K562 (cell line): ENCODE measurements at regions of chr21 and their contacts with region 1.

Region 1: DNA sequence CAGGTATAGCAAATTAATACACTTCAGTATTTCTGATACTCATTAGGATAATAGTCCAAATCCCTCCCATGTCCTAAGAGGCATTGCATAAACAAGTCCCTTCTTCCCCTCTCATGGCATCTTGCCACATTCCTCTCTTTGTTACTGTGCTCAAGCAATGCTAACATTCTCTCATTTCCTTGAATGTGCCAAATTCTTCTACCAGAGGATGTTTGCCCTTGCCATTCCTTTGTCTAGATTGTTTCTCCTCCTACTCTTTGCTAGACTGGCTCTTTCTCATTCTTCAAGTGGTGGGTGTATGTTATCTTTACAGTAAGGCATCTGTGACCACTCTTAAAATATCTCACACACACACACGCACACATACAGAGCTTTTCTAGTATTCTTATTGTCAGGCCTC is 621.0 kb upstream of the CXADR start:
- DNase-seq: no peak
- ATAC-seq: no peak
- H3K4me3 ChIP-seq: no peak overlapping the region
- H3K27ac ChIP-seq: no peak overlapping the region
- H3K4me1 ChIP-seq: no peaks in the 10 kb centered on the region
- H3K27me3 ChIP-seq: no peaks in the 10 kb centered on the region
- CTCF ChIP-seq: no peak
- EP300 ChIP-seq: no peak
- POLR2A ChIP-seq: no peak
- RAD21 ChIP-seq: no peak

Region 2: DNA sequence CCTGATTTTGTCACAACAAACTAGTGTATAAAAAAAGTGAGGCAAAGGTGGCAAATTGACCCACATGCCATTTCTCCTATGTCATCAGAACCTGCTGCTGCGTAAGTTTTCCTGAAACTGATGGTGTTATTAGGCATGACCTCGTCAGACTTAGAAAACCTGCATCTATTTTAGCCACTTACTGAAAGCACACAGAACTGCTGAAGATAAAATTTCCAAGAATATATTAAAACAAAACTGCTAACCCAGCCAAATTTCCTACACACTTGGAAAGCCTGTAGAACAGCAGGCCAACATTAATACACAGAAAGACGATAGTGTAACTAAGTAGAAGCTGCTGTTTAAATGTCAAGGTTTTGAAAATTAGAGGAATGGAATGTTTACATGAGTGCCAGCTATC is 53.5 kb before region 1 on chr21:
- CTCF ChIA-PET with region 1: no interaction called
- POLR2A ChIA-PET with region 1: no interaction called
- in situ Hi-C with region 1: no loop called
- intact Hi-C with region 1: loop called (anchors 10 kb)
- DNase-seq: no peak
- ATAC-seq: no peak
- H3K4me3 ChIP-seq: no peak overlapping the region
- H3K27ac ChIP-seq: no peak overlapping the region
- H3K4me1 ChIP-seq: no peaks in the 10 kb centered on the region
- H3K27me3 ChIP-seq: no peaks in the 10 kb centered on the region
- CTCF ChIP-seq: no peak
- EP300 ChIP-seq: no peak
- POLR2A ChIP-seq: no peak
- RAD21 ChIP-seq: no peak